Naive thymus-derived CD4-positive, alpha-beta T cell (primary cell): ENCODE measurements at regions of chr12 and their contacts with region 1.

Region 1: DNA sequence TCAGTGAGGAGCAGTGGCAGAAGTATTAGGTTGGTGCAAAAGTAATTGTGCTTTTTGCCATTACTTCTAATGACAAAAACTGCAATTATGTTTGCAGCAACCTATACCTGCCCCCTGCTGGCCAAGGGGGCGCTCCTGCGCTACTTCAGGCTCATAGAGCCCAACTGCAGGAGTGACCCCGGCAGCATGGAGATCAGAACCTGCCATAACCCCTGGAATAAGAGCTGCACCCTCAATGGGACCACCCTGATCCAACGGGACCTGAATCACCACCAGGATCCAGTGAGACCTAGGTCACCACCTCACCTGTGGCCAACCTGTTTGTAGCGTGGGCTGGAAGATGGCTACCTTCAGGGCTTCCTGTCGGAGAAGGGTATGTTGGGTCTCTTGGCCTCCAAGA is 8.2 kb upstream of the C12orf42 start:
- DNase-seq: peak; percentile 25 to 72 (median 54)
- ATAC-seq: peak; percentile 85
- H3K4me3 ChIP-seq: no peak overlapping the region
- H3K4me3 Mint-ChIP-seq: no peak overlapping the region
- H3K27ac ChIP-seq: no peak overlapping the region
- H3K27ac Mint-ChIP-seq: peak overlapping the region in 1 of 9 donors; percentile 65
- H3K4me1 ChIP-seq: no peaks in the 10 kb centered on the region
- H3K4me1 Mint-ChIP-seq: peaks cover 0 to 31% (median 0%) of the 10 kb centered on the region in 7 donors
- H3K27me3 ChIP-seq: peaks cover 0 to 4% of the 10 kb centered on the region in 2 donors
- H3K27me3 Mint-ChIP-seq: peaks cover 0 to 14% (median 0%) of the 10 kb centered on the region in 5 donors

Region 2: DNA sequence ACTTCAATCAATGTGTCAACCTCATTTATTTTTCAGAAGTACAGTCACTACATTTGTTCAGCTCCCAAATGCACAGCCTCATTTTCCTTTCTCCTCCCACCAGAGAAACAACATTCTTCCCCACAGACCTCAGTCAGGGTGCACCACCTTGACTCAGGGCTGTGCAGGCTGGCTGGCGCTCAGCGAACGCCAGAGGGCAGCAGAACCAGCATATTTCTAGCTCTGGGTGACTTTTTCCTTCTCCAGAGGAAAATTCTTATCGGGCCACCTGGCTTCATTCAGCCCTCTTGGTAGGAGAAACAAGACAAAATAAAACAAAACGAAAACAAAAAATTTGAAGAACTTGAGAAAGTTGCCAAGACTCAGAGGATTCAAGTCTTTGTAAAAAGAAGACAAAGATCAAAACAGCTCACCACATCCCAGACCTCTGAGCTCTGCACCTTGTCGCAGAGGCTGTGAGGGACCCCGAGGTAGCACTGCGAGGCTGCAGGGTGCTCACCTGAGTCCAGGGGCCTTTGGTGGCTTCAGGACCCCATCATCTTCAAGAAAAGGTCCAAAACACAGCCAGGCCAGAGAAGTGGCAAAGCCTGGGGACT is 620.7 kb before region 1 on chr12:
- CTCF ChIA-PET with region 1: no interaction called
- POLR2A ChIA-PET with region 1: no interaction called
- intact Hi-C with region 1: loop called in 1 of 2 experiments (anchors 1 kb)
- DNase-seq: peak in 6 of 9 donors; percentile 10 to 33 (median 18)
- ATAC-seq: peak; percentile 48
- H3K4me3 ChIP-seq: no peak overlapping the region
- H3K4me3 Mint-ChIP-seq: no peak overlapping the region
- H3K27ac ChIP-seq: no peak overlapping the region
- H3K27ac Mint-ChIP-seq: no peak overlapping the region
- H3K4me1 ChIP-seq: no peaks in the 10 kb centered on the region
- H3K4me1 Mint-ChIP-seq: peaks cover 0 to 5% (median 0%) of the 10 kb centered on the region in 7 donors
- H3K27me3 ChIP-seq: no peaks in the 10 kb centered on the region
- H3K27me3 Mint-ChIP-seq: peaks cover 0 to 26% (median 19%) of the 10 kb centered on the region in 5 donors

Region 3: GRCh38 chr12:102948941-102949352 is 555.0 kb before region 1 on chr12:
- CTCF ChIA-PET with region 1: interaction called, 5 read pairs
- POLR2A ChIA-PET with region 1: no interaction called
- intact Hi-C with region 1: loop called (anchors 1 kb)
- DNase-seq: peak in 5 of 9 donors; percentile 31 to 48 (median 43)
- ATAC-seq: no peak
- H3K4me3 ChIP-seq: no peak overlapping the region
- H3K4me3 Mint-ChIP-seq: no peak overlapping the region
- H3K27ac ChIP-seq: no peak overlapping the region
- H3K27ac Mint-ChIP-seq: no peak overlapping the region
- H3K4me1 ChIP-seq: no peaks in the 10 kb centered on the region
- H3K4me1 Mint-ChIP-seq: peaks cover 0 to 14% (median 4%) of the 10 kb centered on the region in 7 donors
- H3K27me3 ChIP-seq: no peaks in the 10 kb centered on the region
- H3K27me3 Mint-ChIP-seq: peaks cover 60 to 74% (median 61%) of the 10 kb centered on the region in 5 donors

Region 4: DNA sequence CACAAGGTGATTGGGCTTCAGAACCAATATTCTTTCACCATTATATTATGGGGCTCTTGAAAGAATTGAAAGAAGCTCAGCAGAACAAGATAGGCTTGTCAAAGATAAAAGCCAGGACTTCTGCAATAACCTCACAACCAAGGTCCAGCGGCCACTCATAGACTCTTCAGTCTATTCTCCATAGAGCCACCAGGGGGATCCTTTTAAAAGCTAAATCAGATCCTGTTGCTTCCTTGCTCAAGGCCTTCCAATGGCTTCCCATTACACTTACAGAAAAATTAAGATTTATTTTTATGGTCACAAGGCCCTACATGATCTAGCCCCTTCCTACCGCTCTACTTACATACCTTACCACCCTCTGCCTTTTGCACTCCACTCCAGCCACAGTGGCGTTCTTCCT is 177.8 kb before region 1 on chr12:
- CTCF ChIA-PET with region 1: no interaction called
- POLR2A ChIA-PET with region 1: no interaction called
- intact Hi-C with region 1: loop called (anchors 1 kb)
- DNase-seq: no peak
- ATAC-seq: no peak
- H3K4me3 ChIP-seq: no peak overlapping the region
- H3K4me3 Mint-ChIP-seq: no peak overlapping the region
- H3K27ac ChIP-seq: no peak overlapping the region
- H3K27ac Mint-ChIP-seq: no peak overlapping the region
- H3K4me1 ChIP-seq: no peaks in the 10 kb centered on the region
- H3K4me1 Mint-ChIP-seq: no peaks in the 10 kb centered on the region
- H3K27me3 ChIP-seq: no peaks in the 10 kb centered on the region
- H3K27me3 Mint-ChIP-seq: peaks cover 0 to 2% (median 0%) of the 10 kb centered on the region in 5 donors

Region 5: DNA sequence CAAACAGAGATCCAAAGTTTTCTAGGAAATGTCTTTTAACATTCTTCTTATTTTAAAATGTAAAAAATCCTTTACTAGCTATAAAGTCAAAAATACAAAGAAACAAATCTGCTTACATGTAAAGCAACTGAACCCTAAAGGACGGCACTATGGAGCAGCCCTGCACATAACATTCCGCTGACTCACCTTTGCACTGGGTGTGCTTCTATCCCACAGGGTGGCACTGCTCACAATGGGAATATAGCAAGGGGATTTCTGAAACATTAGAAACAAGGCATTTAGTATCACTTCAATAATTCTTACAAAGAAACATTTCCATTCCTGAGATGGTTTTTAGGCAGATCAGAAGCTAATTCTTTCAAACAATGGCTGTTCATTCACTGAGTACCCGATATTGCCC is 102.6 kb before region 1 on chr12:
- CTCF ChIA-PET with region 1: interaction called, 3 read pairs
- POLR2A ChIA-PET with region 1: no interaction called
- intact Hi-C with region 1: loop called in 1 of 2 experiments (anchors 1 kb)
- DNase-seq: peak in 4 of 9 donors; percentile 2 to 42 (median 13)
- ATAC-seq: no peak
- H3K4me3 ChIP-seq: no peak overlapping the region
- H3K4me3 Mint-ChIP-seq: no peak overlapping the region
- H3K27ac ChIP-seq: no peak overlapping the region
- H3K27ac Mint-ChIP-seq: no peak overlapping the region
- H3K4me1 ChIP-seq: no peaks in the 10 kb centered on the region
- H3K4me1 Mint-ChIP-seq: peaks cover 0 to 7% (median 0%) of the 10 kb centered on the region in 7 donors
- H3K27me3 ChIP-seq: no peaks in the 10 kb centered on the region
- H3K27me3 Mint-ChIP-seq: no peaks in the 10 kb centered on the region

Region 6: DNA sequence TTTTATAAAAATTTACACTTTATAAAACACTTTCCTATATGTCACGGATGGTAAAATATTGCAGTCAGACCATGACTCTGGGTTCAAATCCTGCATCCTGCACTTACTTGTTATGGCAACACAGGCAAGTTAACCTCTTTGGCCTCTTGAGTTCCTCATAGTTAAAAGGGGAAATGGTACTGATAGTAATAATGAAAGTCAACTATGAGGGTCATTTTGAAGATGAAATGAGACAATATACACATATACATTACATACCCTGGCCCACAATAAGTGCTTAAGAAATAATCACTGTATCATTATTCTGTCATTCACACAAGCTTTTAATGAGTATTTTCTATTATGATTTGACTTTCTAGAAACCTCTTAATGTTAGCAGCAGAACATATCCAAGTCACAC is 72.6 kb before region 1 on chr12:
- CTCF ChIA-PET with region 1: no interaction called
- POLR2A ChIA-PET with region 1: no interaction called
- intact Hi-C with region 1: no loop called
- DNase-seq: no peak
- ATAC-seq: no peak
- H3K4me3 ChIP-seq: no peak overlapping the region
- H3K4me3 Mint-ChIP-seq: no peak overlapping the region
- H3K27ac ChIP-seq: no peak overlapping the region
- H3K27ac Mint-ChIP-seq: peak overlapping the region in 3 of 9 donors; percentile 34 to 68 (median 44)
- H3K4me1 ChIP-seq: no peaks in the 10 kb centered on the region
- H3K4me1 Mint-ChIP-seq: peaks cover 0 to 23% (median 12%) of the 10 kb centered on the region in 7 donors
- H3K27me3 ChIP-seq: no peaks in the 10 kb centered on the region
- H3K27me3 Mint-ChIP-seq: no peaks in the 10 kb centered on the region

Region 7: GRCh38 chr12:103518899-103519298 is 14.9 kb after region 1 on chr12:
- CTCF ChIA-PET with region 1: no interaction called
- POLR2A ChIA-PET with region 1: no interaction called
- intact Hi-C with region 1: no loop called
- DNase-seq: no peak
- ATAC-seq: no peak
- H3K4me3 ChIP-seq: no peak overlapping the region
- H3K4me3 Mint-ChIP-seq: no peak overlapping the region
- H3K27ac ChIP-seq: no peak overlapping the region
- H3K27ac Mint-ChIP-seq: no peak overlapping the region
- H3K4me1 ChIP-seq: no peaks in the 10 kb centered on the region
- H3K4me1 Mint-ChIP-seq: no peaks in the 10 kb centered on the region
- H3K27me3 ChIP-seq: no peaks in the 10 kb centered on the region
- H3K27me3 Mint-ChIP-seq: peaks cover 0 to 13% (median 0%) of the 10 kb centered on the region in 5 donors